OCI-LY7 (cell line): ENCODE measurements at regions of chr3 and their contacts with region 1.

Region 1: GRCh38 chr3:17179381-17180210 is 294.8 kb downstream of the PLCL2 start:
- DNase-seq: peak; percentile 62
- H3K4me3 ChIP-seq: no peak overlapping the region
- H3K27ac ChIP-seq: no peak overlapping the region
- H3K4me1 ChIP-seq: peaks cover 27% of the 10 kb centered on the region
- CTCF ChIP-seq: no peak

Region 2: GRCh38 chr3:17006132-17006852 is 173.3 kb before region 1 on chr3:
- CTCF ChIA-PET with region 1: no interaction called
- POLR2A ChIA-PET with region 1: no interaction called
- intact Hi-C with region 1: no loop called
- DNase-seq: peak; percentile 16
- H3K4me3 ChIP-seq: no peak overlapping the region
- H3K27ac ChIP-seq: no peak overlapping the region
- H3K4me1 ChIP-seq: no peaks in the 10 kb centered on the region
- CTCF ChIP-seq: no peak

Region 3: GRCh38 chr3:17190353-17191078 is 10.9 kb after region 1 on chr3:
- CTCF ChIA-PET with region 1: interaction called, 4 read pairs
- POLR2A ChIA-PET with region 1: interaction called, 23 read pairs
- intact Hi-C with region 1: no loop called
- DNase-seq: peak; percentile 20
- H3K4me3 ChIP-seq: peak overlapping the region; percentile 43
- H3K27ac ChIP-seq: peak overlapping the region; percentile 43
- H3K4me1 ChIP-seq: peaks cover 58% of the 10 kb centered on the region
- CTCF ChIP-seq: no peak

Region 4: GRCh38 chr3:17349093-17349492 is 169.5 kb after region 1 on chr3:
- CTCF ChIA-PET with region 1: no interaction called
- POLR2A ChIA-PET with region 1: no interaction called
- intact Hi-C with region 1: no loop called
- DNase-seq: no peak
- H3K4me3 ChIP-seq: no peak overlapping the region
- H3K27ac ChIP-seq: no peak overlapping the region
- H3K4me1 ChIP-seq: no peaks in the 10 kb centered on the region
- CTCF ChIP-seq: no peak

Region 5: GRCh38 chr3:17372362-17373210 is 193.0 kb after region 1 on chr3:
- CTCF ChIA-PET with region 1: no interaction called
- POLR2A ChIA-PET with region 1: no interaction called
- intact Hi-C with region 1: no loop called
- DNase-seq: no peak
- H3K4me3 ChIP-seq: no peak overlapping the region
- H3K27ac ChIP-seq: no peak overlapping the region
- H3K4me1 ChIP-seq: no peaks in the 10 kb centered on the region
- CTCF ChIP-seq: no peak

Region 6: GRCh38 chr3:17412950-17413530 is 233.4 kb after region 1 on chr3:
- CTCF ChIA-PET with region 1: no interaction called
- POLR2A ChIA-PET with region 1: no interaction called
- intact Hi-C with region 1: loop called (anchors 10 kb)
- DNase-seq: peak; percentile 79
- H3K4me3 ChIP-seq: no peak overlapping the region
- H3K27ac ChIP-seq: no peak overlapping the region
- H3K4me1 ChIP-seq: no peaks in the 10 kb centered on the region
- CTCF ChIP-seq: peak; percentile 92